Caco-2 (cell line): ENCODE measurements at regions of chr6 and their contacts with region 1.

Region 1: DNA sequence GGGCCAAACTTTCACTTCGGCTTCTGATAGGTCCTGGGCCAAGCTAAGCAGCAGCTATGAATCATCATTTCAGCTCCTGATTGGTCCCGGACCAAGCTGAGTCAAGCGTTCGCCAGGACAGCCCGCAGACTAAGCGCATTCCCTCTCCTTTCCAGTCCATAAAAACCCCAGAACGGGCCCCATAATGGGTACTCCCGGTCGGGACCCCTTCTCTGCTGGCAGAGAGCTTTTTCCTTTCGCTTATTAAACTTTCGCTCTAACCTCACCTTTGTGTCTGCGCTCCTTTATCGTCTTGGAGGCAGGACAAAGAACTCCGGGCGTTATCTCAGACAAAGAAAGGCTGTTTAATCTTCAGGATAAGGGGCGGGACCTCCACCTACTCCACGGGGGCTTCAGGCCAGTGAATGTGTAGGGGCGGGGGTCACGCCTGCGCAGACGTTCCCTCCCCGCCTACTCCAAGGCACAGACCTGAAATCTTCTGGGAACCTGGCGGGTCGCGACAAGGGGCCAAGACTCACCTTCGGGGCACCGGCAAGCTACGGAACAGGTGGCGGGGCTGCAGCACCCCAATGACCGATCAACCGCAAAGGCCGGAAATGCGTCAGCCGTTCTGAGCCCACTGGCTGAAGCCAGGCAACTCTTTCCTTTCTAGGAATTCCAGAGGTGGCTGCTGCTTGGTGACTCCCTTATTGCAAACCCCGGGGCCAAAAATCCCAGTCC is at the start of gene ZSCAN31:
- DNase-seq: peak; percentile 92 to 95
- H3K4me3 ChIP-seq: peak within 1 kb of the TSS; percentile 54
- H3K4me3 Mint-ChIP-seq: no peak within 1 kb of the TSS
- H3K27ac Mint-ChIP-seq: no peak within 1 kb of the TSS
- H3K4me1 ChIP-seq: no peaks in the 10 kb centered on the region; the same call in 1 of the 2 replicates
- H3K4me1 Mint-ChIP-seq: peaks cover 16% of the 10 kb centered on the region
- H3K27me3 ChIP-seq: no peaks in the 10 kb centered on the region
- H3K27me3 Mint-ChIP-seq: peaks cover 2% of the 10 kb centered on the region
- CTCF ChIP-seq: no peak
- total RNA-seq, gene ZSCAN31: 1.7 and 3.4 TPM in 2 replicates

Region 2: GRCh38 chr6:28080631-28081485 is 254.9 kb before region 1 on chr6:
- CTCF ChIA-PET with region 1: no interaction called
- POLR2A ChIA-PET with region 1: interaction called, 10 read pairs
- intact Hi-C with region 1: no loop called
- DNase-seq: peak; percentile 92 to 93
- H3K4me3 ChIP-seq: peak overlapping the region; percentile 58
- H3K4me3 Mint-ChIP-seq: peak overlapping the region; percentile 74
- H3K27ac Mint-ChIP-seq: peak overlapping the region; percentile 92
- H3K4me1 ChIP-seq: peaks cover 3% of the 10 kb centered on the region; the same call in 1 of the 2 replicates
- H3K4me1 Mint-ChIP-seq: peaks cover 16% of the 10 kb centered on the region
- H3K27me3 ChIP-seq: no peaks in the 10 kb centered on the region
- H3K27me3 Mint-ChIP-seq: no peaks in the 10 kb centered on the region
- CTCF ChIP-seq: no peak

Region 3: GRCh38 chr6:28124102-28124970 is 211.4 kb before region 1 on chr6 and contains the start of gene ZSCAN16:
- CTCF ChIA-PET with region 1: no interaction called
- POLR2A ChIA-PET with region 1: no interaction called
- intact Hi-C with region 1: no loop called
- DNase-seq: peak; percentile 84 to 86
- H3K4me3 ChIP-seq: peak within 1 kb of the TSS; percentile 78
- H3K4me3 Mint-ChIP-seq: peak within 1 kb of the TSS; percentile 92
- H3K27ac Mint-ChIP-seq: peak within 1 kb of the TSS; percentile 83
- H3K4me1 ChIP-seq: no peaks in the 10 kb centered on the region
- H3K4me1 Mint-ChIP-seq: peaks cover 16% of the 10 kb centered on the region
- H3K27me3 ChIP-seq: no peaks in the 10 kb centered on the region
- H3K27me3 Mint-ChIP-seq: no peaks in the 10 kb centered on the region
- CTCF ChIP-seq: no peak
- total RNA-seq, gene ZSCAN16: 5.8 and 6.7 TPM in 2 replicates

Region 4: GRCh38 chr6:28266962-28267694 is 68.6 kb before region 1 on chr6 and contains the start of gene ZSCAN26:
- CTCF ChIA-PET with region 1: interaction called, 3 read pairs
- POLR2A ChIA-PET with region 1: interaction called, 13 read pairs
- intact Hi-C with region 1: no loop called
- DNase-seq: peak; percentile 92
- H3K4me3 ChIP-seq: peak within 1 kb of the TSS; percentile 57
- H3K4me3 Mint-ChIP-seq: no peak within 1 kb of the TSS
- H3K27ac Mint-ChIP-seq: no peak within 1 kb of the TSS
- H3K4me1 ChIP-seq: peaks cover 15% of the 10 kb centered on the region
- H3K4me1 Mint-ChIP-seq: no peaks in the 10 kb centered on the region
- H3K27me3 ChIP-seq: no peaks in the 10 kb centered on the region
- H3K27me3 Mint-ChIP-seq: no peaks in the 10 kb centered on the region
- CTCF ChIP-seq: no peak
- total RNA-seq, gene ZSCAN26: 7.2 and 7.8 TPM in 2 replicates

Region 5: GRCh38 chr6:28281288-28282064 is 54.2 kb before region 1 on chr6 and contains the start of gene PGBD1:
- CTCF ChIA-PET with region 1: no interaction called
- POLR2A ChIA-PET with region 1: no interaction called
- intact Hi-C with region 1: loop called (anchors 5 kb)
- DNase-seq: peak; percentile 81 to 84
- H3K4me3 ChIP-seq: peak within 1 kb of the TSS; percentile 74
- H3K4me3 Mint-ChIP-seq: peak within 1 kb of the TSS; percentile 85
- H3K27ac Mint-ChIP-seq: no peak within 1 kb of the TSS
- H3K4me1 ChIP-seq: 0 out of 2 replicates have a peak, but pooled peaks cover 4% of the 10 kb centered on the region
- H3K4me1 Mint-ChIP-seq: peaks cover 10% of the 10 kb centered on the region
- H3K27me3 ChIP-seq: no peaks in the 10 kb centered on the region
- H3K27me3 Mint-ChIP-seq: no peaks in the 10 kb centered on the region
- CTCF ChIP-seq: no peak
- total RNA-seq, gene PGBD1: 3.6 and 3.8 TPM in 2 replicates

Region 6: DNA sequence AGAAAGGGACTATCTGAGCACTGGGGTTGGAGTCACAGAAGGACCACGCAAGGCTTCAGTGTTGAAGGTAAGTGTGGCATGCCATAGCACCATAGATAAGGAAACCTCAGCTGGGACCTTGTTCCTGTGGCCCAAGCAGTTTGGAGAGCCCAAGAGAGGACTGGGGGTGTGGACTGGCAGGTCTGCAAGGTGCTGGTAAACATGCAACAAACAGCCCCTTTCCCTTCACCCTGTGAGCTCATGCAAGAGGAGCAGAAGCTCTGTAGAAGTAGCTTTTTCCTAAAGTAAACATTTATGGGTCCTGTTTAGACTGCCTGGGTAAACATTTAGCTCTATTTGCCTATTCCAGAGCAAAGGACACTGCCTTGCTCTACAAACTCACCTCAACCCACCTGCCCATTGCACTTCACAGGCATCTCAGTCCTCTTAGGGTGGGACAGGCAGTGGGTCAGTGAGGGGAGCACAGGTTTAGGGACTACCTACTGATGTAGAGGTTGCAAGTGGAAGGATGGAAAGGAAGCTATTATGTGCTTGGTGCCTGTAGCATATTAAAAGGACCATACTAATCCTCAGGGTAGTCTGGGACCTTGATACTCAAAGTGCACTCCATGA is 11.8 kb before region 1 on chr6:
- CTCF ChIA-PET with region 1: no interaction called
- POLR2A ChIA-PET with region 1: interaction called, 12 read pairs
- intact Hi-C with region 1: no loop called
- DNase-seq: no peak
- H3K4me3 ChIP-seq: no peak overlapping the region
- H3K4me3 Mint-ChIP-seq: no peak overlapping the region
- H3K27ac Mint-ChIP-seq: no peak overlapping the region
- H3K4me1 ChIP-seq: no peaks in the 10 kb centered on the region
- H3K4me1 Mint-ChIP-seq: peaks cover 11% of the 10 kb centered on the region
- H3K27me3 ChIP-seq: no peaks in the 10 kb centered on the region
- H3K27me3 Mint-ChIP-seq: no peaks in the 10 kb centered on the region
- CTCF ChIP-seq: no peak

Region 7: DNA sequence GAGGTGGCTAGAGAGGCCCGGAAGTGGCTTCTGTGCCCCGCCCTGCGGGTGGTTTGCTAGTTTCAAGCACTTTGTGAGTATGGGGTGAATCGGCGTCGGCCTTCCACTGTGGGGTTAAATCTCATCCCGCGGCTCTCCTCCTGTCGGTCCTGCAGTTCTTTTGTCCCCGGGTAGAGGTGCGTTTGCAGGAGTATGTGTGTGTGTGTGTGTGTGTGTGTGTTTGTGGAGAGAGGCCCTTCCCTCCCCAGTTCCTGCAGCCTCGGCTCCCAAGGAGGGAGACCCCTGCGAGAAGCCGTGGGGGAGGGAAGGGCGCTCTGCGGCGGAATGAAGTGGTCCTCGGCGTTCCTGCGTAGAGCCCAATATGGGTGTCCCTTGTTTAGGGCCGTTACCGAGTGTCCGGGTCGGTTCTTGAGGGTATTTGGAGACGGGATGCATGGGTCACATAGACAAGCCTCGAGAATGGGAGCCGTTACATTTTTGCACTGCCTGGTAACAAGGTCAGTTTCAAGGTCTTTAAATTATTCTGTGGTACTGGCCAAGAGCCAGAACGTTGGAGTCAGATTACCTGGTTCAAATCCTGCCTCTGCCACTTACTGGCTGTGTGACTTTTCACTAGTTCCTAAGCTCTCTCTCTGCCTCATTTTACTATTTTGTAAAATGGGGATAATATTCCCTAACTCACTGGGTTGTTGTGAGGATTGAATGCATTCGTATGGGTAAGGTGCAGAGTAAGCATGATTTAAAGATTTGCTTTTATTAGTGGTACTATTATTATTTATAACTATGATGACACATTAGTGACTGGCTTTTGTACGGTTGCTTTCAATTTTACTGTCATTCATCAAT is 14.4 kb after region 1 on chr6 and contains the start of gene ZKSCAN3:
- CTCF ChIA-PET with region 1: interaction called, 16 read pairs
- POLR2A ChIA-PET with region 1: interaction called, 5 read pairs
- intact Hi-C with region 1: loop called (anchors 2 kb)
- DNase-seq: peak; percentile 76 to 77
- H3K4me3 ChIP-seq: peak within 1 kb of the TSS; percentile 48
- H3K4me3 Mint-ChIP-seq: peak within 1 kb of the TSS; percentile 96
- H3K27ac Mint-ChIP-seq: peak within 1 kb of the TSS; percentile 94
- H3K4me1 ChIP-seq: 0 out of 2 replicates have a peak, but pooled peaks cover 7% of the 10 kb centered on the region
- H3K4me1 Mint-ChIP-seq: peaks cover 11% of the 10 kb centered on the region
- H3K27me3 ChIP-seq: no peaks in the 10 kb centered on the region
- H3K27me3 Mint-ChIP-seq: peaks cover 3% of the 10 kb centered on the region
- CTCF ChIP-seq: no peak
- total RNA-seq, gene ZKSCAN3: 3.7 and 4.3 TPM in 2 replicates